Left cardiac atrium (tissue), 4 donors: ENCODE measurements at regions of chr6 and their contacts with region 1.

Region 1: DNA sequence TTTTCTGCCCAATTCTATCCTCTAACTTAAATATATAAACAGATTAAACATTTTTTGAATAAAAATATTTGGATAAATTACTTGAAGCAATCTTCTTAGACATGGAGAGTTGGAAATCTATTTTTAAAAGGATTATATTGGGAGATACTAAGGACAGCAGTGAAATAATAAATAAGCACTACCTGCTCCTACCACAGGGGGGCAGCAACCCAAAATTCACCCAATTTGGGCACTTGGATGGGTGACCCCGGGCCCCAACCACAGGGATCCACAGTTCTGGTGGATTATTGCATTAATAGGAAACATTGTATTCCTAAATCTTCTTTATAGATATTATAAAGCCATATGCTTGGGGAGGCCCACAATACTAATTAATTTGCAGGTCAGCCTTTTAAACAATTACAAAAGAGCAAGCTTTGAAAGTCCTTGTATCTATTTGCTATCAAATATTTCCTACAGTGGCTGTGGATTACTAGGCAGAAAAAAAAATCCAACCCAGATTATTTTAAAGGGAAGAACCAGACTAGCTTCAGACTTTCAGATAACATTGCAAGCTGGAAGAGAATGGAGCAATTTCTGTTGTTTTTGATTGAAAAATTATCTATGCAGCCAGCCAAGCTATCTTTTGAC is 66.4 kb upstream of the PDE10A start:
- DNase-seq: no peak
- ATAC-seq: peak in 1 of 2 donors; percentile 43

Region 2: DNA sequence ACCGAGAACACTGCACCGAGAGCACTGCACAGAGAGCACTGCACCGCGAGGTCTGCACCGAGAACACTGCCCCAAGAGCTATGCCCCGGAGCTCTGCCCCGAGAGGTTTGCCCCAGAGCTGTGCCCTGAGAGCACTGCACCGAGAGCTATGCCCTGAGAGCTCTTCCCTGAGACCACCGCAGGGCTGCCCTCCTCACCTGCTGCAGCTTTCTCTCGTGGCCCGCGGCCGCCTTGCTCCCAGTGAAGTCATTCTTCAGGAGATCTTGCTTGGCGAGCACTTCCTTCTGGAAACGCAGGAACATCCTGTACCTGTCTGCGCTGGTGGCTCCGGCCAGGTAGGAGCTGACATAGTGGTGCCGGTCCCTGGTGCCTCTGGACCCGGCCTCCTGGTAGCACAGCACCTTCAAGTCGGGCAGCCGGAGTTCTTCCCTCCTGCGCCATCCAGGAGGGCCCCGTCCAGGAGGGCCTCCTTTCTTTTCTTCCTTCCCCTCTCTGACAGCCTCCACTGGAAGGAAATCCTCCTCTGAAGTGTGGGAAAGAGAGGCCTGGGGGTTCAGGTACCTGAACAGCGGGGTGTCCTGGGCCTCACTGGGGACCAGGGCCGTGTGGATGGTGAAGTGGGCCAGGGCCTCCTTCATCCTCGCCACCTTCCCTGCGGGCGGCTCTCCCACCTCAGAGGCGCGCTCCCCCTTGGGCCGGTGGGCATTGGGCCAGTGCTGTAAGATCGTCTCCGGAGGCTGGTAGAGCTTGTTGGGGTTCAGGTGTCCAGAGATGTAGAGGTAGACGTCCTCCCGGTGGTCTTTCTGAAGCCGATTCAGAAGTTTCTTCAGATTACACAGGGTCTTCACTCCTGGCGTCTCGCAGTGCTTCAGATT is 427.8 kb before region 1 on chr6:
- intact Hi-C with region 1: no loop called
- DNase-seq: no peak
- ATAC-seq: no peak

Region 3: GRCh38 chr6:165850434-165851019 is 121.1 kb after region 1 on chr6:
- intact Hi-C with region 1: loop called (anchors 1 to 10 kb)
- DNase-seq: peak; percentile 73
- ATAC-seq: peak; percentile 70 to 71